Activated CD4-positive, alpha-beta T cell treated with anti-CD3 and anti-CD28 coated beads for 36 hours (primary cell): ENCODE measurements at regions of chr3 and their contacts with region 1.

Region 1: DNA sequence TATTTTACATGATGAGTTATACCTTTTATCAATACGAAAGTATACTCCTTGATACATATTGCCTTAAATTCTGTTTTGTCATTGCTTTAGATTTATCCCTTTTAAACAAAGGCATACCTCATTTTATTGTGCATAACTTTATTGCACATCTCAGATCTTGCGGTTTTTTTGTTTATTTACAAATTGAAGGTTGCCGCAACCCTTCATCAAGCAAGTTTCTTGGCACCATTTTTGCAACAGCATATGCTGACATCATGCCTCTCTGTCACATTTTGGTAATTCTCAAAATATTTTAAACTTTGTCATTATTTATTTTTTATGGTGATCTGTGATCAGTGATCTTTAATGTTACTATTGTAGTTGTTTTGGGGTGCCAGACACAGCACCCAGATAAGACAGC is 20.9 kb downstream of the SNRK start:
- DNase-seq: no peak
- ATAC-seq: no peak
- H3K4me3 Mint-ChIP-seq: peak overlapping the region; percentile 9
- H3K27ac Mint-ChIP-seq: peak overlapping the region; percentile 70
- H3K4me1 Mint-ChIP-seq: peaks cover 85% of the 10 kb centered on the region
- H3K27me3 Mint-ChIP-seq: no peaks in the 10 kb centered on the region

Region 2: GRCh38 chr3:43296565-43296964 is 10.7 kb before region 1 on chr3:
- CTCF ChIA-PET with region 1: interaction called, 14 read pairs
- POLR2A ChIA-PET with region 1: no interaction called
- intact Hi-C with region 1: no loop called
- DNase-seq: peak; percentile 65
- ATAC-seq: peak; percentile 87
- H3K4me3 Mint-ChIP-seq: peak overlapping the region; percentile 52
- H3K27ac Mint-ChIP-seq: peak overlapping the region; percentile 90
- H3K4me1 Mint-ChIP-seq: peaks cover 79% of the 10 kb centered on the region
- H3K27me3 Mint-ChIP-seq: no peaks in the 10 kb centered on the region

Region 3: GRCh38 chr3:43319794-43320193 is 12.6 kb after region 1 on chr3:
- CTCF ChIA-PET with region 1: interaction called, 4 read pairs
- POLR2A ChIA-PET with region 1: no interaction called
- intact Hi-C with region 1: loop called in 1 of 2 experiments (anchors 1 kb)
- DNase-seq: no peak
- ATAC-seq: no peak
- H3K4me3 Mint-ChIP-seq: no peak overlapping the region
- H3K27ac Mint-ChIP-seq: peak overlapping the region; percentile 77
- H3K4me1 Mint-ChIP-seq: peaks cover 69% of the 10 kb centered on the region
- H3K27me3 Mint-ChIP-seq: no peaks in the 10 kb centered on the region

Region 4: GRCh38 chr3:43810797-43811196 is 503.6 kb after region 1 on chr3:
- CTCF ChIA-PET with region 1: no interaction called
- POLR2A ChIA-PET with region 1: no interaction called
- intact Hi-C with region 1: no loop called
- DNase-seq: no peak
- ATAC-seq: no peak
- H3K4me3 Mint-ChIP-seq: no peak overlapping the region
- H3K27ac Mint-ChIP-seq: no peak overlapping the region
- H3K4me1 Mint-ChIP-seq: no peaks in the 10 kb centered on the region
- H3K27me3 Mint-ChIP-seq: peaks cover 17% of the 10 kb centered on the region